ENCODE measurements at regions of chr11 and their contacts with region 1.

Region 1: GRCh38 chr11:3014057-3014938 is 22.2 kb upstream of the NAP1L4 start:
- DNase-seq: no peak
- H3K4me3 Mint-ChIP-seq: no peak overlapping the region
- H3K27ac Mint-ChIP-seq: no peak overlapping the region
- H3K4me1 Mint-ChIP-seq: no peaks in the 10 kb centered on the region
- H3K27me3 Mint-ChIP-seq: no peaks in the 10 kb centered on the region
- CTCF ChIP-seq: no peak

Region 2: DNA sequence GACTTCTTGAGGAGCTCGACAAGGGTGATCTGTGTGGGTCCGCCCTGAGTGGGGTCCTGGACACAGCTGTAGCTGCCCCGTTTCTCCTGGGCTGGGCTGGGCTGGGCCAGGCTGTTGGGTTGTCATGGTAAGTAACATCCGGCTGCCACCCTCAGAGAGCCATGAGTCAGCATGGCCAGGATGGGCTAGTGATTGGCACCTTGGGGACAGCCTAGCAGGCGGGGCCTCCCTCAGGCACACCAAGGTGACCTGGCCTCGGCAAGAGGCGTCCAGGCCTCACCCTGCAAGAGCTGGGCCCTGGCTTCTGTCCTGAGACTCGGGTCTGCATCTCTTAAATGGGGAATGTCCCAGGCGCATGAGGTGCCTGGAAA is 73.8 kb before region 1 on chr11:
- CTCF ChIA-PET with region 1: no interaction called
- POLR2A ChIA-PET with region 1: no interaction called
- intact Hi-C with region 1: no loop called
- DNase-seq: peak; percentile 75
- H3K4me3 Mint-ChIP-seq: no peak overlapping the region
- H3K27ac Mint-ChIP-seq: peak overlapping the region; percentile 35
- H3K4me1 Mint-ChIP-seq: no peaks in the 10 kb centered on the region
- H3K27me3 Mint-ChIP-seq: no peaks in the 10 kb centered on the region
- CTCF ChIP-seq: no peak

Region 3: DNA sequence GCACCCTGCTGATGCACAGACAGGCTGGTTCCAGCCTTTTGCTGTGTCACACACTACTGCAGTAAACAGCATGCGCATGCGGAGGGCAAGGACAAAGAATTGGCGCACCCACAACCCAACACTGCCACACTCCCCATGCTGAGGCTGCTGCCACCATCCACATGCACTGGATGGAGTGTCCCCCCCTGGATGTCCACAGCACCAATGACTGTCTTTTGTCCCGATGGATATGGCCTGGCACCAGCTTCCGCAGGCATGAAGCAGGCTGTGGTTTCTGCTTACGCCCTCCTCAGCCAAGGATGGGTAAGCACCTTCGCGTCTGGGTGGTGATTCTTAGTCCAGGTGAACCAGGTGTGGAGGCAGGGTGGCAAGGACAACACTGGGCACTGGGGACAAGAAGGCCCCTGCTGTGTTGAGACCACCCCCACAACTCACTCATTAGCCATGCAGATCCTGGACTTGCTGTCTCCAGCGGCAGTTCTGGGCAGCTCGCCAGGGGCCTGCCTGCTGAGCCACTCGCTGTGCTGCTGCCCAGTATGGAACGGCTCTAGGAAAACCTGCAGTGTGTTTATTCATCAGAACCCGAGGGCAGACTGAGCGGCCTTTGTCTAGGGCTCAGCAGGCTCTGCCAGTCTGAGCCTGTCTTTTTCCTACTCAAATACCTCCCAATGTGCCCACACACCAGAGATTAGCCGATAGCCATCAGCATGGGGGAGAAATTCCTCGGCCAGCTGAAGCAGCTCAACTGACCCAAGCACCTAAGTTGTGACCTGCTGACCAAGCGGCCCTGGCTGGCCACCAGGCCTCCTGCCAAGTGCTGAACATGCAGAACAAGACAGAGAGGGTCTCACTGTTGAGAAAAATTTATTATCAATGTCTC is 14.0 kb before region 1 on chr11:
- CTCF ChIA-PET with region 1: interaction called, 5 read pairs
- POLR2A ChIA-PET with region 1: interaction called, 47 read pairs
- intact Hi-C with region 1: no loop called
- DNase-seq: peak; percentile 90
- H3K4me3 Mint-ChIP-seq: no peak overlapping the region
- H3K27ac Mint-ChIP-seq: peak overlapping the region; percentile 52
- H3K4me1 Mint-ChIP-seq: peaks cover 42% of the 10 kb centered on the region
- H3K27me3 Mint-ChIP-seq: no peaks in the 10 kb centered on the region
- CTCF ChIP-seq: no peak